Caco-2 (cell line): ENCODE measurements at regions of chr13 and their contacts with region 1.

Region 1: GRCh38 chr13:21638319-21639282 is 32.3 kb upstream of the FGF9 start:
- DNase-seq: peak in 1 of 2 experiments; percentile 45
- H3K4me3 ChIP-seq: no peak overlapping the region
- H3K4me3 Mint-ChIP-seq: no peak overlapping the region
- H3K27ac Mint-ChIP-seq: no peak overlapping the region
- H3K4me1 ChIP-seq: peaks cover 10% of the 10 kb centered on the region
- H3K4me1 Mint-ChIP-seq: peaks cover 9% of the 10 kb centered on the region
- H3K27me3 ChIP-seq: no peaks in the 10 kb centered on the region
- H3K27me3 Mint-ChIP-seq: no peaks in the 10 kb centered on the region
- CTCF ChIP-seq: peak; percentile 65 to 86

Region 2: DNA sequence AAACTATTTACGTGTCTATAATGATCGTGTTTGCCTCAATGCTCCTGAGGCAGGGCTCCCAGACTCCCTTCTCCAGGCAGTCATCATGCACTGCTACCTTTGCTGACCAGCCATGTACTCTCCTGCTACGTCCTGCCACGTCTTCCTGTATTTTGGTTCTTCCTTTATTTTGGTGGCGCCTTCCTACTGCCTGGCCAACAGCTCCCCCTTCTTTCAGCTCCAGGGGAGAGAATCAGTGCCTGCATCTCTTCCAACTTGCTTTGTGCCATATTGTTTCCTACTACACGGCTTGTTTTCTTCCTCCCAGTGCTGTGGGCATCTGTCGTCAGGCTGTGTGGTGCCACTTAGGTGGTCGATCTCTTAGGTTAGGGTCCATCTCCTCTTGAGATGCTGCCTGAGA is 128.4 kb after region 1 on chr13:
- CTCF ChIA-PET with region 1: no interaction called
- POLR2A ChIA-PET with region 1: no interaction called
- intact Hi-C with region 1: loop called (anchors 1 kb)
- DNase-seq: no peak
- H3K4me3 ChIP-seq: no peak overlapping the region
- H3K4me3 Mint-ChIP-seq: no peak overlapping the region
- H3K27ac Mint-ChIP-seq: no peak overlapping the region
- H3K4me1 ChIP-seq: peaks cover 3% of the 10 kb centered on the region
- H3K4me1 Mint-ChIP-seq: peaks cover 7% of the 10 kb centered on the region
- H3K27me3 ChIP-seq: no peaks in the 10 kb centered on the region; the same call in 1 of the 2 replicates
- H3K27me3 Mint-ChIP-seq: no peaks in the 10 kb centered on the region
- CTCF ChIP-seq: no peak

Region 3: DNA sequence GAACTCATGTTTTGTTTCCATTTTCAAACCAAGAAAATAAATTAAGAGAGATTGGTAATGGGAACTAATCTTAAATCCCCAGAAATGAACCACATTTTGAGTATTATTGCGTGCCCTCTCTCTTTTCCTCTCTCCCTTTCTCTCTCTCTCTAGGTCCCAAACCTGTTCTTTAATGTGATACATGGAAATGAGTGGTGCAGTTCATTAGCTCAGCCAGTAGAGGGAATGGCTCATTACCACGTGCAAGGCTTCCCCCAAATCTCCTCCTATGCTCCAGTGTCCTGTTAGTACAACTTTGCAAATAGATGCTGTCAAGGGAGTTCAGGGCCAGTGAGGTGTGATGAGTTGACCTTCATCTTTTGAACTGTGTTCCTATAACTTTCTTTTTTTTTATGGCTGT is 210.7 kb after region 1 on chr13:
- CTCF ChIA-PET with region 1: no interaction called
- POLR2A ChIA-PET with region 1: no interaction called
- intact Hi-C with region 1: loop called (anchors 10 kb)
- DNase-seq: peak in 1 of 2 experiments; percentile 55
- H3K4me3 ChIP-seq: no peak overlapping the region
- H3K4me3 Mint-ChIP-seq: no peak overlapping the region
- H3K27ac Mint-ChIP-seq: no peak overlapping the region
- H3K4me1 ChIP-seq: no peaks in the 10 kb centered on the region
- H3K4me1 Mint-ChIP-seq: no peaks in the 10 kb centered on the region
- H3K27me3 ChIP-seq: no peaks in the 10 kb centered on the region
- H3K27me3 Mint-ChIP-seq: no peaks in the 10 kb centered on the region
- CTCF ChIP-seq: peak; percentile 69 to 74

Region 4: DNA sequence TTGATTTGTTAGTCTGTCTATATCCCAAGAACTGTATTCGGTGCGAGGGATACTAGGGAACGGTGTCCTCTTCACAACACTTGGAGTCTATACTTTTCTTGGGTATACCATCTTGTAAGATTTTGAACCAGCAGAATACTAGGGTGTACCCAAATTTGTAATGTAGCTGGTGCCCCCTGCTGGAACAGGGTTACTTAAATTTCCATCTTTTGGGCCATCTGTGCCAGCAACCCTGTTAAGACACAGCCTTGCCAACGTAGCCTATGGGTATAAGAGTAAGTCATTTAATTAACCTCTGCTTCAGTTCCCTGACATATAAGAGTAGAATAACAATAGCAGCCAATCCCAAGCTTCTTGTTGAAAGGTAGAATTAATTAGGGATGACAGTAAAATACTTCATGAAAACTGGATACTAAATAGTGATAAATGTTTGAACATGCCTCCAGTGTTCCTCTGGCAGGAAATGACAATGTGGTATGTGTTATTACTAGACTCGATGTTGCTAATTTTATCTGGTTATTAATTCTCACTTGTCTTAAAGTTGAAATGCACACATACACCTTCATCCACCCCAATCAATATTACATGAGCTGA is 639.8 kb after region 1 on chr13:
- CTCF ChIA-PET with region 1: no interaction called
- POLR2A ChIA-PET with region 1: no interaction called
- intact Hi-C with region 1: loop called (anchors 1 kb)
- DNase-seq: peak; percentile 51 to 60
- H3K4me3 ChIP-seq: no peak overlapping the region
- H3K4me3 Mint-ChIP-seq: no peak overlapping the region
- H3K27ac Mint-ChIP-seq: no peak overlapping the region
- H3K4me1 ChIP-seq: no peaks in the 10 kb centered on the region
- H3K4me1 Mint-ChIP-seq: no peaks in the 10 kb centered on the region
- H3K27me3 ChIP-seq: no peaks in the 10 kb centered on the region
- H3K27me3 Mint-ChIP-seq: no peaks in the 10 kb centered on the region
- CTCF ChIP-seq: peak; percentile 54 to 63

Region 5: GRCh38 chr13:22757530-22758120 is 1119.0 kb after region 1 on chr13:
- CTCF ChIA-PET with region 1: interaction called, 4 read pairs
- POLR2A ChIA-PET with region 1: no interaction called
- intact Hi-C with region 1: loop called (anchors 2 kb)
- DNase-seq: no peak
- H3K4me3 ChIP-seq: no peak overlapping the region
- H3K4me3 Mint-ChIP-seq: no peak overlapping the region
- H3K27ac Mint-ChIP-seq: no peak overlapping the region
- H3K4me1 ChIP-seq: no peaks in the 10 kb centered on the region
- H3K4me1 Mint-ChIP-seq: no peaks in the 10 kb centered on the region
- H3K27me3 ChIP-seq: no peaks in the 10 kb centered on the region
- H3K27me3 Mint-ChIP-seq: no peaks in the 10 kb centered on the region
- CTCF ChIP-seq: peak; percentile 30 to 57

Region 6: GRCh38 chr13:22801402-22802003 is 1162.9 kb after region 1 on chr13:
- CTCF ChIA-PET with region 1: interaction called, 7 read pairs
- POLR2A ChIA-PET with region 1: no interaction called
- intact Hi-C with region 1: loop called (anchors 1 kb)
- DNase-seq: no peak
- H3K4me3 ChIP-seq: no peak overlapping the region
- H3K4me3 Mint-ChIP-seq: no peak overlapping the region
- H3K27ac Mint-ChIP-seq: no peak overlapping the region
- H3K4me1 ChIP-seq: no peaks in the 10 kb centered on the region
- H3K4me1 Mint-ChIP-seq: no peaks in the 10 kb centered on the region
- H3K27me3 ChIP-seq: no peaks in the 10 kb centered on the region
- H3K27me3 Mint-ChIP-seq: peaks cover 2% of the 10 kb centered on the region
- CTCF ChIP-seq: peak; percentile 22 to 39